Heart right ventricle (tissue), 16 donors: ENCODE measurements at regions of chr19 and their contacts with region 1.

Region 1: DNA sequence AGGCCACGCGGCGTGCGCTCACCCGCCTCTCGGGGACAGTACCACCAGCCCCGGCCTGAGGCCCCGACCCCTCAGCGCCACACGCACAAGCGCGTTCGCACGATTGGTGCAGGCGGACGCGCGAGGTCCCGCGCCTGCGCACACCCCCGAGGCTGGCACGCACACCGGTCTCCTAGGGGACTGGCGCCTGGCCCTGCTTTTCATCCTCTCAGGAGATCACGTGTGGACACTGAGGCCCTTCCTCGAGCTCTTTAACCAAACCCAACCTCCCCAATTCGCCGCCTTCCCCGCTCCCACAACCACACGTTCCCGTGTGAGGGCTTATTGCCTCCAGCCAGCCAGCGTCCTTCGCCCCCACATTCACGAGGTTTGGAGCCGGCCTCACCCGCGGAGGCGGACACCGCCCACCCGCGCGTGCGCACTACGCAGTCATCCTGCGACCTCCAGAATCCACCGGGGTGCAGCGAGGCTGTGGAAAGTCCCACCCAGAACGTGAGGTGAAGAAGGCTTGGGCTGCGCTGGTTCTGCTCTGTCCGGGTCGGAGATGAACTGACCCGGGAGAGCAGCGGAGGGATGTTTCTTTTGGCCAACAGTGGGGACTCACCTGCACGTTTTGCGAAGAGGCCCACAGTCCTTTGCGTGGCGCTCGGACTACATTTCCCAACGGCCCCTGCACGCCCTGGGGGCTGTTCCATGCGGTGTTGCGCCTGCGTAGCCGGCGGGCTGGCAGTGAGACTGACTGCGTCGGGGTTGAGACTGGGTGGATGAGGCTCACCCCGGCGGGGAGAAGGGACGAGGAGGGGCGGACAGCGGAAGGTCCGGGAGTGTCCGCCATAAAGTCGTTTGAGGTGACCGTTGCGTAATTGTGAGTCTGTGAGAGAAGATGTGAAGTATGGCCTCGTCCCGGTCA is 539 bp upstream of the ZNF667 start:
- DNase-seq: peak; percentile 93 to 94
- ATAC-seq: peak; percentile 96 to 99 (median 98)
- H3K4me3 ChIP-seq: peak overlapping the region; percentile 55 to 99 (median 76)
- H3K27ac ChIP-seq: peak overlapping the region; percentile 36 to 90 (median 77)
- H3K4me1 ChIP-seq: peaks cover 0 to 25% (median 16%) of the 10 kb centered on the region in 9 donors
- H3K27me3 ChIP-seq: no peaks in the 10 kb centered on the region
- CTCF ChIP-seq: peak in 1 of 9 donors; percentile 10

Region 2: DNA sequence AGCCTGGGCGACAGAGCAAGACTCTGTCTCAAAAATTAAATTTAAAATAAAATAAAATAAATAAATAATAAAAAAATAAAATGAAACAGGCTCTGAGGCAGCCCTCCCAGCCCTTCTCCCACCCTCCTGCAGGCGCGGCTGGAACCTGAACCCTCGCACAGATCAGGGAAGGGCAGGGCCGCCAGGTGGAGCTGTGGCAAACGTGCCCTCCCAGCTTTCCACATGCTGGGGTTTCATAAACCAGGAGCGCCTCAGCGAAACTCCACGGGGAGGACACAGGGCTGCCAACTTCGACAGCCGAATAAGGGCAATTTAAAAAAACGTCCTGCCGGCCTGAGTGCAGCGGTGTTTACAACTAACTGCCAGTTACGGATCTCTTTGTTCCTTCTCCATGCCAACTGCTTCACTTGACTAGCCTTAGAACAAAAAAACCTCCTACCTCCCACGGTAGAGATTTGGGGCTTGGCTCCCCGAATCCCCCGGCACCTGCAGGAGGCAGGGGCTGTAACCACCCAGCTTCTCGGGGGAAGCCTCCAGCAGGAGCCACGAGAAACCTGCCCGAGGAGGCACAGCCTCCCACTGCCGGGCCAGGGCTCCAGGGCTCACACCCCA is 372.5 kb before region 1 on chr19:
- intact Hi-C with region 1: loop called in 1 of 10 experiments (anchors 5 kb)
- DNase-seq: peak; percentile 51 to 69
- ATAC-seq: peak; percentile 56 to 78 (median 74)
- H3K4me3 ChIP-seq: no peak overlapping the region
- H3K27ac ChIP-seq: peak overlapping the region in 5 of 10 donors; percentile 3 to 53 (median 20)
- H3K4me1 ChIP-seq: peaks cover 14 to 61% (median 44%) of the 10 kb centered on the region in 9 donors
- H3K27me3 ChIP-seq: no peaks in the 10 kb centered on the region
- CTCF ChIP-seq: peak; percentile 51 to 79 (median 73)

Region 3: DNA sequence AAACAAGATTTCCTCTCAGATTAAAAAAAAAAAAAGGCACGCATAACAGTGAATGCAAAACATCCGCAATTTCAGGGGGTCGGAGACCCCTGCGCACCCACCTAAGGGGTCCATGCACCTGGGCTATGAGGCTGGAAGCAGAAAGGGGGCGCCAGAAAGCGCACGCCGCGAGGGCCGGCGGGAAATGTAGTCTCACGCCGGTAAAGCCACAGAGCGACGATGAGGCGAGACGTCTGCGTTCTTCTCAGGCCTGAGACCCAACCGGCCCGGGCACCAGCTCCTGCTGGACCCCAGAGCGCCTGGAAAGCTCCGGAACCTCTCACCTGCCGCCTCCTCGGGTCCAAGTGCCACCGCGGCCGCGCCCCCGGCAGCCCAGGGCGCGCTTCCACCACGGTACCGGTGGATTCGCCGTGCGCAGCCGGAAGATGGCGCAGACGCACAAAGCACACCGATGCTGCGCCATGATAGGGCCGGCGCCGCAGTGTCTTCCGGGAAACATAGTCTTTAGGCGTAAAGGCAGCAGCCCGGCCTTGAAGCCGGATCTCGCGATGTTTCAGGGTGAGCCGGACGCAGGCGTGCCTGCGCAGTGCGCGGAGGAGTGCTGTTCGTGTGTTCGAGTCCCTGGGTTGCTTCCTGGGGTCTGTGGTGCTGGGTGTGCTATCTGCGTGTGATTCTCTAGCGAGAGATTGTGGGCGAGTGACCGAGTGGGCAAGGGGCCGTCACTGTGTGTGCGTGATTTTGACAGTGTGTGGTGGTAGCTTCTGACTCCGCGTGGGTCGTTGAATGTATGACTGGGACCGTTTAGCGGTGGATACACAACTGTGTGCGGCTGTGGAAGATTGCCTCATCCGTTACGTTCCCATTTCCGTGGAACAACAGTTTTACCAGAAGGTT is 84.3 kb before region 1 on chr19 and contains the start of gene ZNF582:
- intact Hi-C with region 1: loop called in 1 of 10 experiments (anchors 2 kb)
- DNase-seq: peak; percentile 95 to 97
- ATAC-seq: peak; percentile 99 to 100 (median 99)
- H3K4me3 ChIP-seq: peak within 1 kb of the TSS; percentile 51 to 97 (median 77)
- H3K27ac ChIP-seq: peak within 1 kb of the TSS; percentile 93 to 99 (median 96)
- H3K4me1 ChIP-seq: peaks cover 0 to 15% (median 10%) of the 10 kb centered on the region in 9 donors
- H3K27me3 ChIP-seq: no peaks in the 10 kb centered on the region
- CTCF ChIP-seq: peak; percentile 69 to 94 (median 80)
- total RNA-seq, gene ZNF582: 3.0 to 6.2 (median 4.5) TPM

Region 4: GRCh38 chr19:56403764-56404704 is 73.7 kb before region 1 on chr19 and contains the start of gene ZNF583:
- intact Hi-C with region 1: loop called in 2 of 10 experiments (anchors 5 kb)
- DNase-seq: peak; percentile 97 to 98
- ATAC-seq: peak; percentile 97 to 99 (median 99)
- H3K4me3 ChIP-seq: peak within 1 kb of the TSS; percentile 57 to 80 (median 72)
- H3K27ac ChIP-seq: peak within 1 kb of the TSS; percentile 93 to 99 (median 96)
- H3K4me1 ChIP-seq: peaks cover 4 to 20% (median 14%) of the 10 kb centered on the region in 9 donors
- H3K27me3 ChIP-seq: no peaks in the 10 kb centered on the region
- CTCF ChIP-seq: no peak
- total RNA-seq, gene ZNF583: 4.6 to 7.1 (median 5.4) TPM

Region 5: DNA sequence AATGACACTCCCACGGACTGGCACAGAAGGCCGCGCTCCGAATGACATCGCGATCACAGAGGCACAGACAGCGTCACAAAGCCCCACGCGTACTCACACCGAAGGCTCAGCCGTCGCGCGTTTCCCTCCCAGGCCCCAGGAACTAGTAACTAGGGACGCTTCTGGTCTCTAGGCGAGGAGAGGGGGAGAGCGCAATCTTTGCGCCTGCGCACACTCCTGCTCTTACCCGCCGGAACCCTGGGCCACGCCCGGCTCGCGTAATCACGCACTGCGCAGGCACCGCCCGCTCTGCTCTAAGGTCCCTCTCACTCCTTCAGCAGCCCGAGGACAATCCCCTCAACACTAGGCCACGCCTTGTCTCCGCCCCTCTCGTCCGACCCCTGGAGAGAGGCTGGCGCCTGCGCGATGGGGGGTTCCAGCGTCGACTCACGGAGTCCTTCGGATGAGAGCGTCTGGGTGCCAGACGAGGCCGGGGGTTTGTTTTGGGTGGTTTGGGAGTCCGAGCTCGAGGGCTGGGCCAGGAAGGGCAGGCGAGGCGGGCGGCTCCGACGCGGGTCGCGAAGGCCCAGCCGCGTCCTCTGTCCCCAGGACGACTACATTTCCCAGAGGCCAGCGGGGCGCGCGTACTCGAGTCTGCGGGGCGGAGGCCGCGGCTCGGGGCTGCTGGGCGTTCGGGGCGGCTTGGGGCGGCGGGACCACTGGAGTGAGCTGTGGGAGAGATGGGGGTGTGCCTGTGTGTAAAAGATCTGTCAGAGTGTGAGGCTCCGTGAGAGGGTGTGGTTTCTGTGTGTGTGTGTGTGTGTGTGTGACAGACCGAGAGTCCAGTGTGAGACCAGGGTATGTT is 30.0 kb after region 1 on chr19 and contains the start of gene ZNF471:
- intact Hi-C with region 1: loop called in 2 of 10 experiments (anchors 1 to 2 kb)
- DNase-seq: peak; percentile 99
- ATAC-seq: peak; percentile 100
- H3K4me3 ChIP-seq: peak within 1 kb of the TSS; percentile 48 to 85 (median 71)
- H3K27ac ChIP-seq: peak within 1 kb of the TSS; percentile 93 to 99 (median 98)
- H3K4me1 ChIP-seq: peaks cover 0 to 17% (median 11%) of the 10 kb centered on the region in 9 donors
- H3K27me3 ChIP-seq: no peaks in the 10 kb centered on the region
- CTCF ChIP-seq: no peak
- total RNA-seq, gene ZNF471: 3.9 to 7.7 (median 5.5) TPM

Region 6: DNA sequence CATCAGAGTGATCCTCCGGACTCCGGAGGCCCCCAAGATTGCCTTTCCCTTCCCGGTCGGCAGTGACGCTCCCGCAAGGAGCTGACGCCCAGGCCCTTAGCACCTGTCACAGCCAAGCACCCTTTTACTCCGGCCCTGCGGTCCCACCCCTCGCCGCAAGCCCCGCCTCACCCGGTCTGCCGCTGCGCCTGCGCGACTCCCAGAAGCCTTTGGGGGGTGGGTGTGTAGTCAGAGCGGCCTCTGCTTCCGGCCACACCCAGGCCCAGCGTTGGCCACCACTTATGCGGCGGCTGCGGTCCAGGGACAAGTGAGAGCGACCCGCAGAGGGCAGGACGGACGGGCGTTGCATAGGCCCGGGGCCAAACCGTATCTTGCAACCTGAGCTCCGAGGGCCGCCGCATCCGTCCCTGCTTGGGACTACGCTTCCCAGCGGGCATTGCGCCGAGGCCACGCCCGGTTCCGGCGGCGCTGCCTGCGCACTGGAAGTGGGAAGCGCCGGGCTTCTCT is 60.6 kb after region 1 on chr19:
- intact Hi-C with region 1: loop called in 1 of 10 experiments (anchors 1 kb)
- DNase-seq: peak; percentile 94 to 95
- ATAC-seq: peak; percentile 97 to 100 (median 99)
- H3K4me3 ChIP-seq: peak overlapping the region; percentile 59 to 93 (median 75)
- H3K27ac ChIP-seq: peak overlapping the region; percentile 87 to 99 (median 95)
- H3K4me1 ChIP-seq: peaks cover 0 to 22% (median 14%) of the 10 kb centered on the region in 9 donors
- H3K27me3 ChIP-seq: no peaks in the 10 kb centered on the region
- CTCF ChIP-seq: no peak